ENCODE measurements at regions of chr16 and their contacts with region 1.

Region 1: GRCh38 chr16:56203052-56203451 is 11.8 kb downstream of the GNAO1 start:
- DNase-seq: peak in 7 of 9 experiments; percentile 28 to 77 (median 46)
- ATAC-seq: peak; percentile 75
- H3K4me3 ChIP-seq: no peak overlapping the region
- H3K4me3 Mint-ChIP-seq: no peak overlapping the region
- H3K27ac ChIP-seq: no peak overlapping the region
- H3K27ac Mint-ChIP-seq: no peak overlapping the region
- H3K4me1 ChIP-seq: peaks cover 26% of the 10 kb centered on the region
- H3K4me1 Mint-ChIP-seq: peaks cover 21% of the 10 kb centered on the region
- H3K27me3 ChIP-seq: no peaks in the 10 kb centered on the region
- H3K27me3 Mint-ChIP-seq: no peaks in the 10 kb centered on the region
- CTCF ChIP-seq: peak; percentile 29

Region 2: DNA sequence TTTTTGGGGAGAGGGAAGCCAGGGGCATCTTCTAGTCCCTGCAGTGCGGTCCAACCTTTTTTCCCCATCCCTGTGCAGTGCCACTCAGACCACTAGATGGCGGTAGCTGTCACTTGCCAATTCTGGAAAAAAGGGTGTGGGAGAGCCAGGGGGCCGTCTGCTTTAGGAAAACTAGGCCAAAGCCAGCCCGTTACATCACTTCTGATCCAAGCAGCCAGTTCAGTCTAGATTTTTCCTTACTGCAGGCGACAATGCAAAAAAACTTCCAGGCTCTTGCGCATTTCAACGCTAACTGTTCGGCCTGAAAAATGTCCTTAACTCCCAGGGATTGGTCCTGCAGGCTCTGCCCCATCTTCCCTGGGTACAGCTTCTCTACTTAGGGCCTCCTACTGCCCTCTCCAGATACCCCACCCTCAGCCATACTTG is 258.7 kb before region 1 on chr16:
- CTCF ChIA-PET with region 1: interaction called, 7 read pairs
- POLR2A ChIA-PET with region 1: no interaction called
- intact Hi-C with region 1: loop called in 1 of 2 experiments (anchors 2 kb)
- DNase-seq: peak; percentile 8 to 70 (median 50)
- ATAC-seq: no peak
- H3K4me3 ChIP-seq: no peak overlapping the region
- H3K4me3 Mint-ChIP-seq: no peak overlapping the region
- H3K27ac ChIP-seq: no peak overlapping the region
- H3K27ac Mint-ChIP-seq: no peak overlapping the region
- H3K4me1 ChIP-seq: no peaks in the 10 kb centered on the region
- H3K4me1 Mint-ChIP-seq: no peaks in the 10 kb centered on the region
- H3K27me3 ChIP-seq: no peaks in the 10 kb centered on the region
- H3K27me3 Mint-ChIP-seq: peaks cover 44% of the 10 kb centered on the region
- CTCF ChIP-seq: peak; percentile 87

Region 3: DNA sequence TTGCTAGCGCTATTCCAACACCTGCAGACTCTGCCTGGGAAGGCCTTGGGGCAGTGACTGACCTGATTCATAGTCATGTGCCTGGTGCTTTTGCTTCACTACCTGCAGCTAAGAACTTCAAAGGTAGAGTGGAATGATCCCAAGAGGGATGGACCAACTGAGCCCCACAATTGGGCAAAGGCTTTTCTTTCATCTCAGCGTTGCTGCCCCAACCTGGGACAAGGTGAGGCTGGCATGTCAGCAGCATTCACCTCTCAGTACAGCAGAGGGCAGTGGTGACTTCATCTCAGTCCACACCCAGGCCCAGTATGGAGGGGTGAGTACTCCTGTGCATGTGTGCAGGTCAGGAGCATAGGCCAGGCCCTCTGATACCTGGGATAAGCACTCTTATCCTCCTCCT is 161.4 kb before region 1 on chr16:
- CTCF ChIA-PET with region 1: interaction called, 4 read pairs
- POLR2A ChIA-PET with region 1: no interaction called
- intact Hi-C with region 1: loop called in 1 of 2 experiments (anchors 2 kb)
- DNase-seq: peak in 4 of 9 experiments; percentile 8 to 57 (median 49)
- ATAC-seq: peak; percentile 36
- H3K4me3 ChIP-seq: no peak overlapping the region
- H3K4me3 Mint-ChIP-seq: no peak overlapping the region
- H3K27ac ChIP-seq: no peak overlapping the region
- H3K27ac Mint-ChIP-seq: no peak overlapping the region
- H3K4me1 ChIP-seq: no peaks in the 10 kb centered on the region
- H3K4me1 Mint-ChIP-seq: no peaks in the 10 kb centered on the region
- H3K27me3 ChIP-seq: no peaks in the 10 kb centered on the region
- H3K27me3 Mint-ChIP-seq: peaks cover 27% of the 10 kb centered on the region
- CTCF ChIP-seq: no peak

Region 4: DNA sequence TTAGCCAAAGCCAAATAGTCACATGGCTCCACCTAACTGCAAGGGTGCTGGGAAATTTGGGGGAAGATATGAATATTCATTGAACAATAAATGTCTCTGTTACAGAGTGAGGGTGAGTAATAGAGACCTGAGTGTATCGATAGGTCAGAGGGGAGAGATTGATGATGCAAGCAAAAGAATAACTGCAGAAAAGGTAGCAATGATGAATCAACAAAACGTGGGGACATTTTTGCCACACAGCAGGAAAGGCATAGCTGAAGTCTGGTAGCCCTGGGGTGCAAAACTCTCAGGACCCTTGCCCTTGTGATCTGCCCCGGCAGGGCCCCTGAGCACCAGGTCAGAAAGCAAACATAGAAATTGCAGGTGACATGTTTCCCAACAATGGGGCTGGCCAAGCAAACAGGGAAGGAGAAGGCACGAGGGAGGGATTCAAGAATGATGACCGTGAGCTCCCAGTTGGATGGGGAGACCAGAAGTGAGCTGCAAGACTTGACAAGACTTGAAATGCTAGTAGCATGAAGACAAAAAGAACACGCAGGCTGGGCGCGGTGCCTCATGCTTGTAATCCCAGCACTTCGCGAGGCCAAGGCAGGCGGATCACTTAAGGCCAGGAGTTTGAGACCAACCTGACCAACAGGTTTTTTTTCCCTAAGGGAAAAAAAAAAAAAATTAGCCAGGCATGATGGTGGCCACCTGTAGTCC is 716.2 kb after region 1 on chr16:
- CTCF ChIA-PET with region 1: no interaction called
- POLR2A ChIA-PET with region 1: no interaction called
- intact Hi-C with region 1: no loop called
- DNase-seq: no peak
- ATAC-seq: no peak
- H3K4me3 ChIP-seq: no peak overlapping the region
- H3K4me3 Mint-ChIP-seq: no peak overlapping the region
- H3K27ac ChIP-seq: no peak overlapping the region
- H3K27ac Mint-ChIP-seq: no peak overlapping the region
- H3K4me1 ChIP-seq: peaks cover 13% of the 10 kb centered on the region
- H3K4me1 Mint-ChIP-seq: peaks cover 12% of the 10 kb centered on the region
- H3K27me3 ChIP-seq: no peaks in the 10 kb centered on the region
- H3K27me3 Mint-ChIP-seq: no peaks in the 10 kb centered on the region
- CTCF ChIP-seq: no peak